OCI-LY7 (cell line): ENCODE measurements at regions of chr9 and their contacts with region 1.

Region 1: DNA sequence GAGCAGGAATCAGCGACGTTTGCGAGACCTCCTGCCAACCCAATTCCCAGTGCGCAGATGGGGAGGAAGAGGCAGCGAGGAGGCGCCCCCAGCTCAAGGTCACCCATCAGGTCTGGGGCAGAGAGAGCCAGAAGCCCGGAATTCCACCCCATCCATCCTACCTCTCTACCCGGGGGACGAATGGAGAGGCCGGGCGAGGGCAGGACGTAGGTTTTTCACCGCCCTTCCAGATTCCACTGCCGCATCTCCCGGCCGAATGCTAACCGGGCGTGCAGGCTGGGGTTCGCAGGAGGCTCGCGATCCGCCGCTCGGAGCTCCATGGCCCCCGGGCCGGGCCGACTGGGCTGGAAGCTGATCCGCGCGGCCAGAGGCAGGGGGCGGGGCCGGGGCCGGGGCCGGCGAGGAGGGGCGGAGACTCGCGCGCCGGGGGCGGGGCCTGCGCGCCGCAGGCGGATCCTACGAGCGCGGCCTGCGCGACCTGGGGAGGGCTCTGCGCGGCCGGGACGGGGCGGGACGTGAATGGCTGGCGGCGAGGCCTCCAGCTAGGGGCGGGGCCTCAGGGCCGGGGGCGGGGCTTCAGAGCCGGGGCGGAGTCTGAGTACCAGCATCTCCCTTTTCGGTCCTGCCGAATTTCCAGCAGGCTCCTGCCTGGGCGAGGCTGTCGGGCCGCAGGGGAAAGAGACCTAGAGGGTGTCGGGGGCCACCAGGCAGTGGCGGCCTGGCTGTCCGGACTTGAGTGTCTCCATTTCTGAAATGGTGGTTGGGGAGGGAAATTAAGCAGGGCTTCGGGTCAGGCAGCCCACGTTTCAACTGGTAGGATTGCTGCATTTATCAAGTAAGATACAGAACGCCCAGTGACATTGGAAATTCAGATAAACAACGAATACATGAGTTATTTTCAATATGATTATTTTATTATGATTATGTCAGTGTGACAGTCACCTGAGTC is at the start of gene ST6GALNAC4:
- DNase-seq: peak; percentile 95
- H3K4me3 ChIP-seq: peak within 1 kb of the TSS; percentile 89
- H3K27ac ChIP-seq: peak within 1 kb of the TSS; percentile 91
- H3K4me1 ChIP-seq: peaks cover 63% of the 10 kb centered on the region
- CTCF ChIP-seq: no peak
- total RNA-seq, gene ST6GALNAC4: 112 and 180 TPM in 2 replicates

Region 2: GRCh38 chr9:127503947-127504782 is 412.8 kb before region 1 on chr9:
- CTCF ChIA-PET with region 1: no interaction called
- POLR2A ChIA-PET with region 1: no interaction called
- intact Hi-C with region 1: loop called (anchors 10 kb)
- DNase-seq: peak; percentile 78
- H3K4me3 ChIP-seq: no peak overlapping the region
- H3K27ac ChIP-seq: no peak overlapping the region
- H3K4me1 ChIP-seq: no peaks in the 10 kb centered on the region
- CTCF ChIP-seq: peak; percentile 85

Region 3: GRCh38 chr9:127734747-127735529 is 182.0 kb before region 1 on chr9 and contains the start of gene TOR2A:
- CTCF ChIA-PET with region 1: no interaction called
- POLR2A ChIA-PET with region 1: interaction called, 3 read pairs
- intact Hi-C with region 1: loop called (anchors 2 kb)
- DNase-seq: peak; percentile 97
- H3K4me3 ChIP-seq: peak within 1 kb of the TSS; percentile 75
- H3K27ac ChIP-seq: peak within 1 kb of the TSS; percentile 69
- H3K4me1 ChIP-seq: peaks cover 19% of the 10 kb centered on the region
- CTCF ChIP-seq: peak; percentile 93
- total RNA-seq, gene TOR2A: 8.9 and 13.9 TPM in 2 replicates

Region 4: DNA sequence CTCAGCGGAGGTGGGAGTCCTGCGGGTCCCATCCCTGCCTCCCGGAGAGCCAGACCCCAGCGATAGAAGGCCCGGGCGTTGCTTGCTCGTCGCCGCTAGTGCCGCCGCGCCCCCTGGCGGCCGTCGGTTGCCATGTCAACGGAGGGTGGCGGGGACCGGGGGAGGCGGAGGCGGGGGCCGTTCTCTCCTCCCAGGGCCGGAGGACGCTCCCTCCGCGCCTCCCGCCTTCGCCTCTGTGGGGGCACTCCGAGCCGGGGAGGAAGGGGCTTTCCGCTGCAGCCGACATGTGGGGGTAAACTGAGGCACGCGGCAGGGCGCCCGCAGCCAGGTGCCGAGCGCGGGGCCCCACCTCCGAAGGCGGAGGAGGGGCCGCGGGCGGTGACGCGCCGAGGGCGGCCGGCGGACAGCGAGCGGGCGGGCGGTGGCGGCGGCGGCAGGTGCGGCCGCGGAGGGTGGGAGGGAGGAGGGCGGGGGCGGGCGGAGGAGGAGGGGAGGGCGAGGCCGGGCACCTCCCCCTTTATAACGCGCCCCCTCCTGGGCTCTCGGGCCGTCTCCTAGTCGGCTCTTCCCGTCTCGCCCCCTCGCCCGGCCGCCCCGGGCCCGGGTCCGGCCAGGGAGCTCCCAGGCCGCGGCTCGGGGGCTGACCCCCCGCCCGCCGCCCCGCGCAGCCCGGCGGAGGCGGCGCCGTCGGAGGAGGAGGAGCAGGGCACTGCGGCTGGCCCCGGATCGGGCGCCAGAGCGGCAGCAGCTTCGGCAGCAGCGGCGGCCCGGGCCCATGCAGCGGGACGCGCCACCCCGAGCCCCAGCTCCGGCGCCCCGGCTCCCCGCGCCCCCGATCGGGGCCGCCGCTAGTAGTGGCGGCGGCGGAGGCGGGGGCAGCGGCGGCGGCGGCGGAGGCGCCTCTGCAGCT is 131.7 kb before region 1 on chr9:
- CTCF ChIA-PET with region 1: no interaction called
- POLR2A ChIA-PET with region 1: interaction called, 4 read pairs
- intact Hi-C with region 1: loop called (anchors 2 kb)
- DNase-seq: peak; percentile 89
- H3K4me3 ChIP-seq: peak overlapping the region; percentile 88
- H3K27ac ChIP-seq: peak overlapping the region; percentile 89
- H3K4me1 ChIP-seq: peaks cover 56% of the 10 kb centered on the region
- CTCF ChIP-seq: peak; percentile 89

Region 5: DNA sequence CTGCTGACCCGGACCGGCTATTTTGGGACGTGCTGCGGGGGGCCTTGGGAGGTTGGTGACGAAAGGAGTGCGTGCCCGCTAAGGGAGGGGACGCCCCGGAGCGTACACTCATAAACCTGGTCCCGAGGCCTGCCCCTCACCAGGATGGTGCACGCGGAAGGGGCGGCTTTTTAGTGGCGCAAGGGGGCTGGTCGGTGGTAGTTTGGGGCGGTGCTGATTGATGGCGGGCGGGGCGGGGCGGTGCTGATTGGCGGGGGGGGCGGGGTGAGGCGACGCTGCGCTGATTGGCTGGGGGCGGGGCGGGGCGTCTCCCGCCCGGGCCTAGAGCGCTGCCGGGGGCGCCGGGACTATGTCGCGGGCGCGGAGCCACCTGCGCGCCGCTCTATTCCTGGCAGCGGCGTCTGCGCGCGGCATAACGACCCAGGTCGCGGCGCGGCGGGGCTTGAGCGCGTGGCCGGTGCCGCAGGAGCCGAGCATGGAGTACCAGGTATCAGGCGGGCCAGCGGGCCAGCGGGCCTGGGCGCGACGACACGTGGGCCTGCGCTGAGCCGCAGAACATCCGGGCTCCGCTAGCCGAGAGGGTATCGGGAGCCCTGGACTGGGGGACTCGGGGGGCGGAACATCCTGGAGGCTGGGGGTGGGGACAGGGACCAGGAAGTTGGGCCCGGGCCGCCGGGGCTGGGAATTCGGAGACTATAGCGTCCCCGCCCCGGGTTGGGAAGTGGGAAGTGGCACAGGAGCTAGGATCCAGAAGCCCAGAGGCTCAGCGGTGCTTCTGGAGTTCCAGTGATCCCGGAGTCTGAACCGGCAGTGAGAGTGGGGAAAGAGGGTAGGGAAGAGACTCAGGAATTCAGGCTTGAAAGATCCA is 114.1 kb before region 1 on chr9 and contains the start of gene FPGS:
- CTCF ChIA-PET with region 1: no interaction called
- POLR2A ChIA-PET with region 1: interaction called, 4 read pairs
- intact Hi-C with region 1: loop called (anchors 5 kb)
- DNase-seq: peak; percentile 92
- H3K4me3 ChIP-seq: peak within 1 kb of the TSS; percentile 98
- H3K27ac ChIP-seq: peak within 1 kb of the TSS; percentile 78
- H3K4me1 ChIP-seq: peaks cover 47% of the 10 kb centered on the region
- CTCF ChIP-seq: no peak
- total RNA-seq, gene FPGS: 136 and 147 TPM in 2 replicates

Region 6: GRCh38 chr9:127869310-127870152 is 47.4 kb before region 1 on chr9:
- CTCF ChIA-PET with region 1: interaction called, 14 read pairs
- POLR2A ChIA-PET with region 1: interaction called, 5 read pairs
- intact Hi-C with region 1: loop called (anchors 2 kb)
- DNase-seq: peak; percentile 87
- H3K4me3 ChIP-seq: no peak overlapping the region
- H3K27ac ChIP-seq: no peak overlapping the region
- H3K4me1 ChIP-seq: peaks cover 9% of the 10 kb centered on the region
- CTCF ChIP-seq: peak; percentile 93

Region 7: DNA sequence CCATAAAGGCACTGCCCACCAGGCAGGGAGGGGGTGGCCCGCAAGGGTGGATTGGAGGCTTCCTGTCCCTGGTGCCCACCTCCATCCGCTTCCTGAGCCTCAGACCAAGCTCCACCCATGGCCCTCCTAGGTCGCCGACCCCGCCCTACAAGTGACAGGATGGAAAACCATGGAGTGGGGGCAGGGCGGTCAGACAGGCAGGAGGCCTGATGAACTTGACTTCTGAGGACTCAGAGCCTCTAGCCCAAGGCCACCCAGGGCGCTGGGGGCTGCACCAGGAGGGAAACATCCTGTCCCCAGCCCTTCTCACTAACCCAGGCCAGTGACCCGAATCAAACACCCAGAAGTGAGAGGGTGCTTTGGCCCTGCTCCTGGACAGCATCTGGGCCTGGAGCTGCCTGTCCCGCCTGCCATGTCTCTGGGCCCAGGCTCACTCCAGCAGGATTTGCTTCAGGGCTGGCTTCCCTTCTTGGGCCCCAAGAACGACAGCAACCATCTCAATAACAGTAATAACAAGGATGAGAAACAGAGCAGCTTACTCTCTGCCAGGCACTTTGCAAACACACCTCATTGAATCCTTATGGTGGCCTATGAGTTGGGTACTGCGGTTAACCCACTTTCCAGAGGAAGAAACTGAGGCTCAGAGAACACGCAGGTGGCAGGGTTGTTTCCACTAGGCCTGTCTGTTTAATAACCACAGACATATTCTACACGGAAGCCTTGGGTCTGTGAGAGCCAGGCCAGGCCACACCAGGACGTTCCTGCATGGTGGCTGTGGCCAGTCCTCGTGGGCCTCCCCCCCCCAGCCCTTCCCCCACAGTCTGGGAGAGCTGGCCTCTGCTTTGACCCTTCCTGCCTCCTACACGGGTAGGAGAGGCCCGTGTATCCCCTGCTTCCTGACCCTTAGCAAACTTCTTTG is 13.1 kb before region 1 on chr9:
- CTCF ChIA-PET with region 1: interaction called, 5 read pairs
- POLR2A ChIA-PET with region 1: interaction called, 22 read pairs
- intact Hi-C with region 1: loop called (anchors 1 kb)
- DNase-seq: peak; percentile 91
- H3K4me3 ChIP-seq: peak overlapping the region; percentile 58
- H3K27ac ChIP-seq: peak overlapping the region; percentile 94
- H3K4me1 ChIP-seq: peaks cover 79% of the 10 kb centered on the region
- CTCF ChIP-seq: no peak